Activated naive CD4-positive, alpha-beta T cell treated with anti-CD3 and anti-CD28 coated beads for 36 hours (primary cell): ENCODE measurements at regions of chr11 and their contacts with region 1.

Region 1: GRCh38 chr11:74449369-74449931 is 17.9 kb downstream of the KCNE3 start:
- DNase-seq: peak; percentile 52
- H3K4me3 Mint-ChIP-seq: no peak overlapping the region
- H3K27ac Mint-ChIP-seq: no peak overlapping the region
- H3K4me1 Mint-ChIP-seq: peaks cover 8% of the 10 kb centered on the region
- H3K27me3 Mint-ChIP-seq: peaks cover 2% of the 10 kb centered on the region

Region 2: DNA sequence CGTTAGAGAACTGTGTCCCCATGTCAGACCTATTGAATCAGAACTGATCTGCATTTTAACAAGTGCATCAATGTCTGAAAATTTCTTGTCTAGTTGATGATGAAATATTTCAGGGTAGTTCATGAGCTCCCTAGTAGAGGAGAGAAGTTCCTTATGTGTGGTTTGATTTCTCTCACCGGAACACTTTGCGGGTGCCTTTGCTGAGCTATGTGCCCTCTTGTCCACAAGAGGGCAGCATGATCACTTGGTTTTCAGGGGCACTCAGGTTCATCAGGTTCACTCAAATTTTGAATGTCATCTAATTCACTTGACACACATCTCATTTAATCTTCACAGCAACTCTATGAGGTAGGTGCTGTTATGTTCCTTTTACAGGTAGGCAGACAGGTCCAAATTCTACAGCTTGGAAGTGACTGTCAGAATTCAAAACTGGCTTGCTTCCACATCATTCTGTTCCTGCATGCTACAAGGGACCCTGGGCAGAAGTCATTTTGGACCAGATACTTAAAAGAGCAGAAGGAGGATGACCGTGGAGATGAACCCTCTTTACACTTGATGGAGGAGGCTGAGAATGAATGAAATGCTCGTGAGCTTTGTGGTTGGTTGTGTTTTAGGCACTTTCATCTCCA is 193.6 kb before region 1 on chr11:
- CTCF ChIA-PET with region 1: interaction called, 45 read pairs
- intact Hi-C with region 1: loop called (anchors 1 kb)
- DNase-seq: peak; percentile 68
- H3K4me3 Mint-ChIP-seq: no peak overlapping the region
- H3K27ac Mint-ChIP-seq: no peak overlapping the region
- H3K4me1 Mint-ChIP-seq: peaks cover 3% of the 10 kb centered on the region
- H3K27me3 Mint-ChIP-seq: no peaks in the 10 kb centered on the region

Region 3: DNA sequence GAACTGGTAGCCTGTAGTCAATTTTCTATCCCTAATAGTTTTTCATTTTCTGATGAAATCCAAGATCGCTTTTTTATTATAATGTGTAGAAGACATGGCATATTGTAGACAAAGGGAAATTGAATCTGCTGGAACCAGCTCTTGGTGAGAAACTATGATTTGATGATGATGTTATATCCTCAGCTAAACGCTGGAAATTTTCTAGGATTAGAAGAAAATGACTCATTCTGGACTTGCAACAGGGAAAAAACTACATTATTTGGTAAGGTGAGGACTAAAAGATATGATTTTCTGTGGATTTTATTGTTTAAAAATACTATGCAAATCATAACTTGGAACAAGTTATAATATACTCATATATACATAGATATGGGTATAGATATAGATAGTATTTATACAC is 37.1 kb before region 1 on chr11:
- CTCF ChIA-PET with region 1: interaction called, 11 read pairs
- intact Hi-C with region 1: no loop called
- DNase-seq: no peak
- H3K4me3 Mint-ChIP-seq: no peak overlapping the region
- H3K27ac Mint-ChIP-seq: no peak overlapping the region
- H3K4me1 Mint-ChIP-seq: peaks cover 19% of the 10 kb centered on the region
- H3K27me3 Mint-ChIP-seq: no peaks in the 10 kb centered on the region

Region 4: DNA sequence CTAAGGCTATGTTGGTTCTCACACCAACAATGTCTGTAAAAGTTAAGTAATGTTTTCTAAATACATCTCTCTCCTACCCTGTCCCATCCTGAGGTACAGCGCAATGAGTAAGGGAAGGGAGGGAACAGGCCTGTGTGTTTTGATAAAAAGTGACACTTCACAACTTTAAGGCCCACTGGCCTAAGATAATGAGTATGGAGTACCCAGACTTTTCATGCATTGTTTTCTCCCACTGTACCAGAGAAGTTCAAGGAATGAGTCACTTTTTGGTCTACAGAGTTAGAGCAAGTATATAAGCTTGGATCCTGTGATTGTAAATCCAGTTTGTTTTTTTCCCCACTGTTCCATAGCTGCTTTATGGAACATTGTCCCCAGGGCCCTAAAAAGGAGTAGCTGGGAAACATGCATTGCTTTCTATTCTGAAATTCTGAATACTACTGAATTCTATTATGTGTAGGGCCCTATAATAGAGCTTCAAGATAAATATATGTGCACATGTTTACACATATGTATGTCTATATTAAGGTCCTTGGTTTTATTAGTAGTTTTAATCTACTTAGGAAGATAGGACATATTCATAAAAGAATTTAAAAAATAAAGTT is 11.9 kb before region 1 on chr11:
- CTCF ChIA-PET with region 1: interaction called, 32 read pairs
- intact Hi-C with region 1: no loop called
- DNase-seq: no peak
- H3K4me3 Mint-ChIP-seq: no peak overlapping the region
- H3K27ac Mint-ChIP-seq: no peak overlapping the region
- H3K4me1 Mint-ChIP-seq: peaks cover 2% of the 10 kb centered on the region
- H3K27me3 Mint-ChIP-seq: no peaks in the 10 kb centered on the region

Region 5: DNA sequence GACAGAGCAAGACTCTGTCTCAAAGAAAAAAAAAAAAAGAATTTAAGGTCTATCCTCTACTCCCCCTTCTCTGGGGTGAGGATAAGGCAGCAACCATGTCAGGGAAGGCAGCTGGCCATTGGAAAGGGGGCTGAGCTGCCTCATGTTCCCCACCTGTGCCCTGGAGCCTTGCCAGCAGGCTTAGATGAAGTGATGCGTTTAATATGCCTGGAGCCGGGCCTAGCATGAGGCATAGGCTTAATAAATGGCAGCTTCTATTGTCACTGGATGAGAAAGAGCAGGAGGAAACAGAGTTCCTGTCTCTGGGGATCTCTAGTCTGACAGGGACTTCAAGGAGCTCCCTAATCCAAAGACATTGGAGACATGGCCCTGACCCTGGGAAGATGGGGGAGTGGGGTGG is 21.1 kb after region 1 on chr11:
- CTCF ChIA-PET with region 1: interaction called, 13 read pairs
- intact Hi-C with region 1: no loop called
- DNase-seq: no peak
- H3K4me3 Mint-ChIP-seq: no peak overlapping the region
- H3K27ac Mint-ChIP-seq: no peak overlapping the region
- H3K4me1 Mint-ChIP-seq: peaks cover 9% of the 10 kb centered on the region
- H3K27me3 Mint-ChIP-seq: peaks cover 26% of the 10 kb centered on the region

Region 6: GRCh38 chr11:74570266-74571061 is 121.0 kb after region 1 on chr11:
- CTCF ChIA-PET with region 1: interaction called, 88 read pairs
- intact Hi-C with region 1: loop called (anchors 1 kb)
- DNase-seq: peak; percentile 55
- H3K4me3 Mint-ChIP-seq: no peak overlapping the region
- H3K27ac Mint-ChIP-seq: no peak overlapping the region
- H3K4me1 Mint-ChIP-seq: no peaks in the 10 kb centered on the region
- H3K27me3 Mint-ChIP-seq: no peaks in the 10 kb centered on the region

Region 7: GRCh38 chr11:74739546-74740270 is 290.3 kb after region 1 on chr11:
- CTCF ChIA-PET with region 1: interaction called, 3 read pairs
- intact Hi-C with region 1: loop called (anchors 1 kb)
- DNase-seq: peak; percentile 53
- H3K4me3 Mint-ChIP-seq: no peak overlapping the region
- H3K27ac Mint-ChIP-seq: no peak overlapping the region
- H3K4me1 Mint-ChIP-seq: peaks cover 15% of the 10 kb centered on the region
- H3K27me3 Mint-ChIP-seq: peaks cover 15% of the 10 kb centered on the region